ENCODE measurements at regions of chr7 and their contacts with region 1.

Region 1: GRCh38 chr7:151110941-151111645 is 24.8 kb downstream of the AGAP3 start:
- DNase-seq: peak; percentile 41 to 79 (median 71)
- ATAC-seq: peak; percentile 82
- H3K4me3 ChIP-seq: no peak overlapping the region
- H3K4me3 Mint-ChIP-seq: peak overlapping the region in 1 of 10 donors; percentile 29
- H3K27ac ChIP-seq: no peak overlapping the region
- H3K27ac Mint-ChIP-seq: no peak overlapping the region
- H3K4me1 ChIP-seq: no peaks in the 10 kb centered on the region
- H3K4me1 Mint-ChIP-seq: peaks cover 0 to 9% (median 4%) of the 10 kb centered on the region in 7 donors
- H3K27me3 ChIP-seq: peaks cover 0 to 4% of the 10 kb centered on the region in 2 donors
- H3K27me3 Mint-ChIP-seq: peaks cover 0 to 20% (median 0%) of the 10 kb centered on the region in 5 donors

Region 2: DNA sequence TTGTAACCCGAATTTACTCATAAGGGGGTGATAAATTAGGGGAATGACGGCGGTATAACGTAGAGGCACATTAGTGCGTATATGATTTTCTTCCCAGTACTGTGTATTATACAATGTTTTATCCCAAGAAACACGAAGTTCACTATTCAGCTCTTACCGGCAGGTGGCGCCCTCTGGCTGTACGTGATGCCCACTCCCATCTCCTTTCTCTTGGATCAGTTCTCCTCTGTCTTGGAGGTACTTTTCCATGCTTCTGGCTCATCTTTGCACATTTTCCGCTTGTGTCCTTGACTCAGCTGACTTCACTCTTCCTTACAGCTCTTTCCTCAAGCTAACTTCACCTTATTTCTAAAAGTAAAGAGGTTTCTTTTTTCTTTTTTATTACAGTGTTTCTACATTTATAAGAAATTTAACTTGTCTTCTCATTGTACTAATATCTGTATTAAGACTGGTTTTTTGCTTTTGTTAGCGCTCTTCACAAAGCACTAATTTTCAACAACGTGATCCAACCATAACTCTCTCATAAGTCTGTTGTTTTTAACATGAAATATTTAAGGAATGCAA is 332.3 kb before region 1 on chr7:
- CTCF ChIA-PET with region 1: no interaction called
- POLR2A ChIA-PET with region 1: no interaction called
- intact Hi-C with region 1: loop called (anchors 1 to 10 kb)
- DNase-seq: peak; percentile 31 to 76 (median 60)
- ATAC-seq: peak; percentile 88
- H3K4me3 ChIP-seq: no peak overlapping the region
- H3K4me3 Mint-ChIP-seq: no peak overlapping the region
- H3K27ac ChIP-seq: no peak overlapping the region
- H3K27ac Mint-ChIP-seq: no peak overlapping the region
- H3K4me1 ChIP-seq: no peaks in the 10 kb centered on the region
- H3K4me1 Mint-ChIP-seq: peaks cover 0 to 8% (median 4%) of the 10 kb centered on the region in 7 donors
- H3K27me3 ChIP-seq: no peaks in the 10 kb centered on the region
- H3K27me3 Mint-ChIP-seq: peaks cover 0 to 42% (median 0%) of the 10 kb centered on the region in 5 donors

Region 3: DNA sequence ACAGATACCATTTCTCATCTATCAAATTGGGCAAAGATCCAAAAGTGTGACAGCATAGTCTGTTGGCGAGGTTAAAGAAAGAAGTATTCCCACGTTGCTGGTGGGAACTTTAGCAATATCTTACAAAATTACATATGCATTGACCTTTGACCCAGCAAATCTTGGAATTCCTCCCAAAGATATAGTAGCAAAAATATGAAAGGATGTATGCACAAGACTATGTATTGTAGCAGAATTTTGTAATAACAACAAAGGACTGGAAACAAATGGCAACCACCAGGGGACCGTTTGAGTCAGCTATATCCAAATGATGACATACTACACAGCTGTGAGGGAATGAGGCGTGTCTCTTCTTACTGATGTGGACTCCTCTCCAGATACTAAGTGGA is 183.1 kb before region 1 on chr7:
- CTCF ChIA-PET with region 1: no interaction called
- POLR2A ChIA-PET with region 1: no interaction called
- intact Hi-C with region 1: no loop called
- DNase-seq: no peak
- ATAC-seq: no peak
- H3K4me3 ChIP-seq: no peak overlapping the region
- H3K4me3 Mint-ChIP-seq: no peak overlapping the region
- H3K27ac ChIP-seq: no peak overlapping the region
- H3K27ac Mint-ChIP-seq: no peak overlapping the region
- H3K4me1 ChIP-seq: peaks cover 0 to 5% of the 10 kb centered on the region in 2 donors
- H3K4me1 Mint-ChIP-seq: peaks cover 8 to 30% (median 23%) of the 10 kb centered on the region in 7 donors
- H3K27me3 ChIP-seq: no peaks in the 10 kb centered on the region
- H3K27me3 Mint-ChIP-seq: peaks cover 0 to 49% (median 4%) of the 10 kb centered on the region in 5 donors

Region 4: GRCh38 chr7:150962553-150963399 is 148.3 kb before region 1 on chr7:
- CTCF ChIA-PET with region 1: interaction called, 62 read pairs
- POLR2A ChIA-PET with region 1: no interaction called
- intact Hi-C with region 1: loop called (anchors 1 kb)
- DNase-seq: peak; percentile 31 to 69 (median 53)
- ATAC-seq: peak; percentile 82
- H3K4me3 ChIP-seq: no peak overlapping the region
- H3K4me3 Mint-ChIP-seq: peak overlapping the region in 1 of 10 donors; percentile 51
- H3K27ac ChIP-seq: no peak overlapping the region
- H3K27ac Mint-ChIP-seq: no peak overlapping the region
- H3K4me1 ChIP-seq: no peaks in the 10 kb centered on the region
- H3K4me1 Mint-ChIP-seq: peaks cover 9 to 41% (median 24%) of the 10 kb centered on the region in 7 donors
- H3K27me3 ChIP-seq: no peaks in the 10 kb centered on the region
- H3K27me3 Mint-ChIP-seq: peaks cover 15 to 36% (median 20%) of the 10 kb centered on the region in 5 donors

Region 5: DNA sequence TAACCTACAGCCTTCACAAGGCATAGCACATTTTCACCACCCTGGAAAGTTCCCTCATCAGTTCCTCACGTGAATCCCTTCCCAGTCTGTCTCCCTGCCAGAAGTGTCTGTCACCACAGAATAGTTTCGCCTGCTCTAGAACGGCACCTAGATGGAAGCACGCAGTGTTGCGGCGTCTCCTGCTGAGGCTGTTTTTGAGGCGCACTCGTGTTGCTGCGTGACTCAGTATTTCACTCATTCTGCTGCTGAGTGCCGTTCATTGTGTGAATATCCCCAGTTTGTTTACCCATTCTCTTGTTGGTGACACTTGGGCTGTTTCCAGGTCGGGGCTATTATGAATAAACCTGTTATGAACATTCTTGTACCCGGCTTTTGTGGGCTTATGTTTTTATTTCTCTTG is 107.5 kb before region 1 on chr7:
- CTCF ChIA-PET with region 1: no interaction called
- POLR2A ChIA-PET with region 1: no interaction called
- intact Hi-C with region 1: no loop called
- DNase-seq: no peak
- ATAC-seq: no peak
- H3K4me3 ChIP-seq: no peak overlapping the region
- H3K4me3 Mint-ChIP-seq: no peak overlapping the region
- H3K27ac ChIP-seq: no peak overlapping the region
- H3K27ac Mint-ChIP-seq: peak overlapping the region in 2 of 9 donors; percentile 10 to 36
- H3K4me1 ChIP-seq: peaks cover 23 to 38% of the 10 kb centered on the region in 2 donors
- H3K4me1 Mint-ChIP-seq: peaks cover 16 to 55% (median 40%) of the 10 kb centered on the region in 7 donors
- H3K27me3 ChIP-seq: no peaks in the 10 kb centered on the region
- H3K27me3 Mint-ChIP-seq: no peaks in the 10 kb centered on the region

Region 6: DNA sequence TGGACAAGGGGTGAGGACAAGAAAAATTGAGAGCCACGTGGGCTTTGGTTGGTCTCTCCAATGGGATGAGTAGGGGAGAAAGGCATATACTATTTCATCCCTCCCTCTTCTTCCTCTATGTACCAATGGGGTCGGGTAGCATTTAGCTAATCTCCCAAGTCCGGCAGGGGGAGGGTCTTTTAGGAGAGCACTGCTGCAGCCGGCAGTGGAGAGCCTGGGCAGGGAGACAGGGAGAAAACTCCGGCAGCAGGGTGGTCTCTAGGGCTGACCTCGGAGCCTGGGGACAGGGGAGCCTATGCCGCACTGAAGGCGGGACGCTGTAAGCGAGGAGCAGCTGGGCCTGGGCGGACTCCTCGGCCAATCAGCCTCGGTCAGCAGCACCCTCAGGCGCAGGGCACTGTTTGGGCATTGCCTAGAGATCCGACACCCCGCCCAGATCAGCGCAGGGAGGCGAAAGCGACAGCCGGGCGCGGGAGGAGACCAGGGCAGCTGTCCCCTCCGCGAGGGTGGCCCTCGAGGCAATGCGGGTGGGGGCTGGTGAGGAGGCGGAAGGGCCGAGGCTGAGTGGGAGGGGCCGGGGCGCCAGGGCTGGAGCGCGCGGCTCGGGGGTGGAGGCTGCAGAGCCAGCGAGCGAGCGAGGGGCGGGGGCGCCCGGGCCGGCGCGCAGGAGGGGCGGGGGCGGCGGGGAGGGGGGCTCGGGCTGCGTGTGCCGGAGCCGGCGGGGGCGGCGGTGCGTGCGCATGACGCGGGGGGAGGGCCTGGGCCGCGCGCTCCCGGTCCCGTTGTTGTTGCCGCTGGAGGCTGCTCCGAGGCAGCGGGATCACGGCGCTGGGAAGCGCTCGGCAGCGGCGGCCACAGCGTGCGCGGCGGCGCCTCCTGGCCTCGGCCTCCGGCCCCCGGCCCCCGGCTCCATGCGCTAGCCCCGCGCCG is 25.1 kb before region 1 on chr7 and contains the start of gene AGAP3:
- CTCF ChIA-PET with region 1: interaction called, 4 read pairs
- POLR2A ChIA-PET with region 1: interaction called, 3 read pairs
- intact Hi-C with region 1: loop called (anchors 1 to 2 kb)
- DNase-seq: peak; percentile 41 to 75 (median 50)
- ATAC-seq: peak; percentile 23
- H3K4me3 ChIP-seq: peak within 1 kb of the TSS; percentile 68
- H3K4me3 Mint-ChIP-seq: peak within 1 kb of the TSS; percentile 87 to 97 (median 92)
- H3K27ac ChIP-seq: peak within 1 kb of the TSS; percentile 68
- H3K27ac Mint-ChIP-seq: peak within 1 kb of the TSS; percentile 56 to 96 (median 87)
- H3K4me1 ChIP-seq: peaks cover 36 to 41% of the 10 kb centered on the region in 2 donors
- H3K4me1 Mint-ChIP-seq: peaks cover 31 to 55% (median 41%) of the 10 kb centered on the region in 7 donors
- H3K27me3 ChIP-seq: no peaks in the 10 kb centered on the region
- H3K27me3 Mint-ChIP-seq: peaks cover 0 to 14% (median 0%) of the 10 kb centered on the region in 5 donors
- total RNA-seq, gene AGAP3: 27.4 to 70.6 (median 37.2) TPM

Region 7: GRCh38 chr7:151806204-151806603 is 695.1 kb after region 1 on chr7:
- CTCF ChIA-PET with region 1: no interaction called
- POLR2A ChIA-PET with region 1: no interaction called
- intact Hi-C with region 1: no loop called
- DNase-seq: no peak
- ATAC-seq: peak; percentile 62
- H3K4me3 ChIP-seq: no peak overlapping the region
- H3K4me3 Mint-ChIP-seq: peak overlapping the region in 1 of 10 donors; percentile 5
- H3K27ac ChIP-seq: no peak overlapping the region
- H3K27ac Mint-ChIP-seq: no peak overlapping the region
- H3K4me1 ChIP-seq: no peaks in the 10 kb centered on the region
- H3K4me1 Mint-ChIP-seq: peaks cover 0 to 19% (median 8%) of the 10 kb centered on the region in 7 donors
- H3K27me3 ChIP-seq: no peaks in the 10 kb centered on the region
- H3K27me3 Mint-ChIP-seq: no peaks in the 10 kb centered on the region